ENCODE measurements at regions of chr18 and their contacts with region 1.

Region 1: DNA sequence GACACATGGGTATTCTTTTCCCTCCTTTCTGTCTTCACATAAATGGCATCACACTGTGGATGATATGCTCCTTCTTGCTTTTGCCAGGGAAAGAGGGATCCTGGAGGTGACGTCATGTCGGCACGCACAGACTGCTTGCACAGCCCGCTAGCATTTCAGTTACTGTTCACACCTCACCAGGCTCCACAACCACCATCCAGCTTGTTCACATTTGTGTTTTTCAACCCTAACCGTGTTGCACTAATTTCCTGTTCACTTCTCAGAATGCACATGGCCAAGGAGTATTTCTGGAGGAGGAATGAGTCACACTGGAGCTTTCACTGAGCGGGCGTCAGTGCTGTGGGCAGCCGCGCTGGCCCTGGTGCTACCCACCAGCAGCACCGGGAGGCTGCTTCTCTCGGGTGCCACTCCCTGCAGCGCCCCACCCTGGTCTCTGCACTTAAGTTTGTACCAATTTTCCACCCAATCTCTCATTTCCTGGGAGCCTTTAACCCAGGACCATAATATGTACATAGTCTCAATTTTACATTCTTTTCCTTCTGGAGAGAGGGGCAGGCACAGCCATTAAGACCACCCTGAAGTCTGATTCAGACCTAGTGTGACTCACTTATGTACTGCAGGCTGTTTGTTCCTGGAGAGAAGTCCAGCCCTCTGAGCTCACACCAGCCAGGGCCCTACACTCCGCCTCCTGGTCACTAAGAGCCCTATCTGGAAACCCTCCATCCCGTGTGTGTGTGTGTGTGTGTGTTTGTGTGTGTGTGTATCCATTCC is 65.1 kb downstream of the MBP start:
- DNase-seq: peak; percentile 75
- H3K4me3 Mint-ChIP-seq: peak overlapping the region; percentile 76
- H3K27ac Mint-ChIP-seq: peak overlapping the region; percentile 96
- H3K4me1 Mint-ChIP-seq: peaks cover 100% of the 10 kb centered on the region
- H3K27me3 Mint-ChIP-seq: no peaks in the 10 kb centered on the region

Region 2: GRCh38 chr18:75874401-75875089 is 1192.9 kb before region 1 on chr18:
- intact Hi-C with region 1: no loop called
- DNase-seq: no peak
- H3K4me3 Mint-ChIP-seq: no peak overlapping the region
- H3K27ac Mint-ChIP-seq: no peak overlapping the region
- H3K4me1 Mint-ChIP-seq: no peaks in the 10 kb centered on the region
- H3K27me3 Mint-ChIP-seq: no peaks in the 10 kb centered on the region

Region 3: GRCh38 chr18:77054606-77055428 is 12.7 kb before region 1 on chr18:
- intact Hi-C with region 1: loop called (anchors 1 kb)
- DNase-seq: peak; percentile 78
- H3K4me3 Mint-ChIP-seq: peak overlapping the region; percentile 72
- H3K27ac Mint-ChIP-seq: peak overlapping the region; percentile 95
- H3K4me1 Mint-ChIP-seq: peaks cover 66% of the 10 kb centered on the region
- H3K27me3 Mint-ChIP-seq: no peaks in the 10 kb centered on the region

Region 4: GRCh38 chr18:77207540-77207939 is 140.1 kb after region 1 on chr18:
- intact Hi-C with region 1: loop called (anchors 2 kb)
- DNase-seq: no peak
- H3K4me3 Mint-ChIP-seq: peak overlapping the region; percentile 28
- H3K27ac Mint-ChIP-seq: no peak overlapping the region
- H3K4me1 Mint-ChIP-seq: peaks cover 45% of the 10 kb centered on the region
- H3K27me3 Mint-ChIP-seq: no peaks in the 10 kb centered on the region

Measured in activated T-helper 1 cell treated with anti-CD3 and anti-CD28 coated beads, Interleukin-12 subunit alpha, Interleukin-12 subunit beta, Interleukin-2, Interleukin-4 antibody, amounts not matched to agents 30 ng/mL and 10 ng/mL and 1 ng/mL, durations not matched to agents 14 hours and 24 hours and 36 hours (primary cell).